ENCODE measurements at regions of chr1 and their contacts with region 1.

Region 1: DNA sequence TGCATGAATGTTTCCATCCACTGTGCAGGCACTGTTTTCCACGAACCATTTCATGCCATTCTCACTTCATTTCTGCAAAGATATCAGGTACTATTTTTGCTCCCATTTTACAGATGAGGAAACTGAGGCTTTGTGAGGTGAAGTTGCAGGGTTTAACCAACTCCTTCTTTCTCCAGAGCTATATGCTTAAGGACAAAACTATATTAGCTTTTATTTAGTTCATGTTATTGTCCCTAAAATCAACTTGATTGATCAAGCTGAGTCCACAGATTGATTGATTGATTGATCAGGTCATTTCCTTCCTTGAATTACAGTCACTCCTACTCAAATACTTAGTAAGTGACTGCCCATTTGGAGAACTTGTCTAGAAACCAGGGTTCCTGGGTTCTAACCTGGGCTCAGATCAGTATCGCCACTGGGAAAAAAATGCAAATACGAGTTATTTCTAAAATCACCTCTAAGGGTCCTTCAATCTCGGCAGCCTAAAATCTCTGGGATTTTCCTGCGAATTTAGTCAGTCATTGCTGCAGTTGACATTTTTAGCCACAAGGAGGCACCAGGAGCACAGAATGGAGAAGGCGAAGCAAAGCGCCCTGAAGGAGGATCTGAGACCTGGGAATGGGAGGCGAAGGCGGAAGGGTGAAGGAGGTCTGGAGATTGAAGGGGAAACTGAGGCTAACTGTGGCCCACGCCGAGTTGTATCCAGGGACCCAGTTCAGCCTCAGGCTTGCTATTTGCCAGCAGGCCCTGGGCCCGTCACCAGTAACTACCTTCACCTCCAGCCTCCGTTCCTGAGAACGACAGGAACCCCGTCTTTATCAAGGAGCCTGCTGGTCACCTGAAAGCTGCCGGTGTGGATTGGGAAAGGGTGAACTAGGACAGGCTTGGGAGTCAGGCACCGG is 14.3 kb upstream of the MUL1 start:
- DNase-seq: peak; percentile 38 to 74 (median 68)
- ATAC-seq: peak; percentile 65
- H3K4me3 ChIP-seq: no peak overlapping the region
- H3K4me3 Mint-ChIP-seq: no peak overlapping the region
- H3K27ac ChIP-seq: no peak overlapping the region
- H3K27ac Mint-ChIP-seq: no peak overlapping the region
- H3K4me1 ChIP-seq: no peaks in the 10 kb centered on the region
- H3K4me1 Mint-ChIP-seq: no peaks in the 10 kb centered on the region
- H3K27me3 ChIP-seq: no peaks in the 10 kb centered on the region
- H3K27me3 Mint-ChIP-seq: peaks cover 22% of the 10 kb centered on the region
- CTCF ChIP-seq: peak; percentile 82

Region 2: DNA sequence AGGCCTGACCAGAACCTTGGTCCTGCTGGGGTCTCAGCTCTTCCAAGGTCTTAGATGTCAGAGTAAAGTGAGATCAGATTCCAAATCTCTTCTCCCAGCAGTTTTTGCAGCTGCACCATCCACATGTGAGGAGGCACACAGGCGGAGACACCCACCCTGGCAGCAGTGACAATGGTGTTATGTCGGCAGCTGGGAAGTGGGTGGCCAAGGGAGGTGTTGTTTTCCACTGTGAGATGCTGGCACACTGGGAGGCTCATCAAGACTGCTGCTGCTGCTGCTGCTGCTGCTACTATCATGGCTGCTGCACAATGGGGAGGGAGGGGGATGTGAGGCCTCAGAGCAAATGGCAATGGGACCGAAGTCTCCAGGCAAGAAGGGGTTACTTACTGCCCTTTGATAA is 59.8 kb before region 1 on chr1:
- CTCF ChIA-PET with region 1: no interaction called
- POLR2A ChIA-PET with region 1: no interaction called
- intact Hi-C with region 1: loop called in 1 of 2 experiments (anchors 2 kb)
- DNase-seq: no peak
- ATAC-seq: no peak
- H3K4me3 ChIP-seq: no peak overlapping the region
- H3K4me3 Mint-ChIP-seq: no peak overlapping the region
- H3K27ac ChIP-seq: no peak overlapping the region
- H3K27ac Mint-ChIP-seq: no peak overlapping the region
- H3K4me1 ChIP-seq: no peaks in the 10 kb centered on the region
- H3K4me1 Mint-ChIP-seq: no peaks in the 10 kb centered on the region
- H3K27me3 ChIP-seq: no peaks in the 10 kb centered on the region
- H3K27me3 Mint-ChIP-seq: peaks cover 45% of the 10 kb centered on the region
- CTCF ChIP-seq: no peak

Region 3: DNA sequence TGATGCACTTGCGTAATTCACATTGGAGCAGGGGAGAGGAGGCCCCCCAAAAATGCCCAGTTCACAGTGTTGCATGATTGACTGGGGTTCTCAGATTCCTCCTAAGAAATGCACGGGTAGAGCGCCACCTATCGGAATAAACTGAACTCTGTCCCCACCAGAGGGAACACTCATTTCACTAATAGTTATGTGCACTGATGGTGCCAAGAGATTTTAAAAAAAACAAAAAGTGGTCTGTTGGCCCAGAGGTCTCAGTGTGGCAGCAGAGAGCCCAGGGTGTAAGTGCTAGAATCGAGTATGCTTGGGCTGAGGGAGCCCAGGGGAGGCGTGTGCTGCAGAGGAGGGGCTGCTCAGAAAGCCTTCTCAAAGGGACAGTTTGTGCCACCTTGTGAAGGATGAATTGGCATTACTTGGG is 118.0 kb after region 1 on chr1:
- CTCF ChIA-PET with region 1: interaction called, 67 read pairs
- POLR2A ChIA-PET with region 1: no interaction called
- intact Hi-C with region 1: loop called in 1 of 2 experiments (anchors 1 kb)
- DNase-seq: peak in 8 of 9 experiments; percentile 39 to 76 (median 60)
- ATAC-seq: peak; percentile 77
- H3K4me3 ChIP-seq: no peak overlapping the region
- H3K4me3 Mint-ChIP-seq: no peak overlapping the region
- H3K27ac ChIP-seq: no peak overlapping the region
- H3K27ac Mint-ChIP-seq: no peak overlapping the region
- H3K4me1 ChIP-seq: no peaks in the 10 kb centered on the region
- H3K4me1 Mint-ChIP-seq: no peaks in the 10 kb centered on the region
- H3K27me3 ChIP-seq: no peaks in the 10 kb centered on the region
- H3K27me3 Mint-ChIP-seq: no peaks in the 10 kb centered on the region
- CTCF ChIP-seq: peak; percentile 92

Region 4: DNA sequence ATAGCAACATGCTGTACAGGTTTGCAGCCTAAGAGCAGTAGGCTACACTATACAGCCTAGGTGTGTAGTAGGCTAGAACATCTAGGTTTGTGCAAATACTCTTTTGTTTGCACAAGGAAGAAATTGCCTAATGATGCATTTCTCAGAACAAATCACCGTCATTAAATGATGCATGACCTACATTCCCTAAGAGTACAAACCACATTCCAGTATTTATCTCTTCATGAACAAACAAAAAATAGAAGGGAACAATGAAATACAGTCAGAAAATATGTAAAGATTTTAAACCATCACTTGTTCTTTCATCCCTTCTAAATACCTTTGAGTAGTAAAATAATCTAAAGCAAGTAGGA is 374.6 kb after region 1 on chr1:
- CTCF ChIA-PET with region 1: no interaction called
- POLR2A ChIA-PET with region 1: no interaction called
- intact Hi-C with region 1: no loop called
- DNase-seq: no peak
- ATAC-seq: no peak
- H3K4me3 ChIP-seq: no peak overlapping the region
- H3K4me3 Mint-ChIP-seq: no peak overlapping the region
- H3K27ac ChIP-seq: no peak overlapping the region
- H3K27ac Mint-ChIP-seq: no peak overlapping the region
- H3K4me1 ChIP-seq: no peaks in the 10 kb centered on the region
- H3K4me1 Mint-ChIP-seq: no peaks in the 10 kb centered on the region
- H3K27me3 ChIP-seq: no peaks in the 10 kb centered on the region
- H3K27me3 Mint-ChIP-seq: no peaks in the 10 kb centered on the region
- CTCF ChIP-seq: no peak

Measured in CD8-positive, alpha-beta T cell (primary cell).